Dendritic cell treated with granulocyte-macrophage colony-stimulating factor and Interleukin-4, amounts not matched to agents 40 ng/mL and 50 ng/mL, for 4 days (primary cell): ENCODE measurements at regions of chr15 and their contacts with region 1.

Region 1: DNA sequence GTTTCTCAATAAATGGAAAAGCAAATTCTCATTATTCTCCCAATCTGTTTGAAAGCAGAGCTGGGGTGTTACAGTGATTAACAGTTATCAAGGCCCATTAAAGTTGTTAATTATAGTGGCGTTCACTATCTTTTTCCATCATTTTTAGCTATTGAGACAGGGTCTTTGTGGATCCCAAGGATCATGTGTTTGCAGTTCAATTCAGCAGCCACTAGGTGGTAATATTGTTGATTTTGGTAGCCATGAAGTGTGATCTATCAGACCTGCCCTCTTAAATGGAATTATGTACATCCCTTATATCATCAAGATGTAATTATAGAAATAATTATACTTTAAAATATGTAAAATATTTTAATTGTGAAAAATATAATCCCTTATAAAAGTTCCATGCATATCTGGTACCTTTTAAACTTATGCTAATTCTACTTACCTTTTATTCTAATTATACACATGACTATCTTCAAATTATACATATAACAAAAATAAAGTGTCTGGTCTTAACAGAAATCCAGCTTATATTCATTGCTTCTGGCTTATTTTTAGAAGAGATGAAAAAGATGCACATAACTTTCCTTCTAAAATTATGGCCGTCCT is 126.4 kb downstream of the GREM1 start:
- H3K4me3 Mint-ChIP-seq: no peak overlapping the region
- H3K27ac Mint-ChIP-seq: no peak overlapping the region
- H3K4me1 Mint-ChIP-seq: no peaks in the 10 kb centered on the region
- H3K27me3 Mint-ChIP-seq: no peaks in the 10 kb centered on the region

Region 2: GRCh38 chr15:32936283-32936918 is 92.2 kb after region 1 on chr15:
- intact Hi-C with region 1: loop called (anchors 5 kb)
- H3K4me3 Mint-ChIP-seq: no peak overlapping the region
- H3K27ac Mint-ChIP-seq: no peak overlapping the region
- H3K4me1 Mint-ChIP-seq: no peaks in the 10 kb centered on the region
- H3K27me3 Mint-ChIP-seq: peaks cover 6% of the 10 kb centered on the region

Region 3: DNA sequence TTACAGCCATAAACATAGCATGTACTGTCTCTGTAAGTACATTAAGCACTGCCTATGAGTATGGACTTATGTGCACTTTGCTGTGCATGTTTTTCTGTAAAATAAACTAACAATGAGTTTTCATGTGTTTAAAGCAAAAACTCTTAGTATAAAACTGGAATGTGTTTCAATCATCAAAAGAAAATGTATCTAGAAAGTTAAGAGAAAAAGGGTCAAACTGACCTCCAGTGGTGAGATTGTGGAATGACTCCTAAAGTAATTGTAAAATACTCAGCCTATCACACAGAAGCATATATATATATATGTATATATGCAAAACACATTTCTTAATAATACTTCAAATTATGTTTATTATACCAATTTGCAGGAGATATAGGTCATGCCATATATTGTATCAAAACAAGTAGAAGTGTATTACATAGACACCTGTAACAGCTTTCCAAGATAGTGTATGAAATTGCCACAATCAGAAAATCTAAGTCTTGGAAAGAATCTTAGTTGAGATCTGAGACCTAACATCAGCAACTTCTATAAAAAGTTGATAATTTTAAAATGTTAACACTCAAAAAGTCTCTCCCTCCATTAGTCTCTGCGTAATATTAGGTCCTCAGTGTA is 150.7 kb after region 1 on chr15:
- intact Hi-C with region 1: loop called (anchors 10 kb)
- H3K4me3 Mint-ChIP-seq: no peak overlapping the region
- H3K27ac Mint-ChIP-seq: no peak overlapping the region
- H3K4me1 Mint-ChIP-seq: no peaks in the 10 kb centered on the region
- H3K27me3 Mint-ChIP-seq: no peaks in the 10 kb centered on the region

Region 4: GRCh38 chr15:34818526-34818925 is 1974.3 kb after region 1 on chr15:
- intact Hi-C with region 1: no loop called
- H3K4me3 Mint-ChIP-seq: no peak overlapping the region
- H3K27ac Mint-ChIP-seq: no peak overlapping the region
- H3K4me1 Mint-ChIP-seq: no peaks in the 10 kb centered on the region
- H3K27me3 Mint-ChIP-seq: peaks cover 3% of the 10 kb centered on the region